Esophagus muscularis mucosa (tissue), 4 donors: ENCODE measurements at regions of chr11 and their contacts with region 1.

Region 1: DNA sequence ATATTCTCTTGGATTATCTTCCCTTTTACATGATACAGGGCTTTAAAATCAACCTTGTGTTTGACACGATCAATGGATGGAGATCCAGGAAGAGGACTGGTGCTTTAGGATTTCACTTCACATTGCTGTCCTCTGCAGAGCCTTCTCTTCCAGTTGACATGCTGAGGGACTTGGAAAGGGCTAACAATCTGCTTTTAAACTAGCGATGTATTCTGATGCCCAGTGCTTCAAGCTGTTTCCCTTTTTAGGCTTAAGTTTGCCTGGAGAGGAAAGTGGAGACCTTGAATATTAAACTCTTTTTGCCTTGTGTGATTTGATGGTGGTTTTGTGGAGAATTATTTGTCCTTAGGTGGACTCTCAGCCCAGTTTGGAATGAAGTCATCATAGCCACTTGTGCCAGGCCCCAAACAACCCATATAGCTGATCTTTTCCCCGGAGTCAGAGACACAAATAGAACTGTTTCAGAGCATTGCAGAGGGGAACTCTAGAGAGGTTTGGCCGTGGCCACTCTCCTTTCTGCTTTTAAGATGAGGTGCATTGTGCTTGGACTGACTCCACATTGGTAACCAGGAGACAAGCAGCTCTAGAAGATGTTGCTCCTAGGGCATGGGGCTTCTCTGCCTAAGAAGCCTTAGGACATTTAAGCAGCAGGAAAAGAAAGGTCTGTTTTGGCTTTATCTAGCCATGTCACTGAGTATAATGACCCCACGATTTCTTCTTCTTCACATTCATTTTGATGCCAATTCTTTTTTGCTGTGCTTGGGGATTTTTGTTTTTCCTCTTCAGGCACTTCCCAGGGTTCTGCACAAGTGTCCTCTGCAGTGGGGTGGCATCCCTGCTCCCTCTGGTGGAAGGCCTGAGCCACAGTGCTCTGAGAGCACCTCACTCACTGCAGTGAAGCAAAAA is 152.8 kb downstream of the NCAM1 start:
- DNase-seq: no peak
- H3K4me3 ChIP-seq: no peak overlapping the region
- H3K27ac ChIP-seq: peak overlapping the region; percentile 47 to 73 (median 50)
- H3K4me1 ChIP-seq: peaks cover 31 to 49% (median 42%) of the 10 kb centered on the region in 4 donors
- H3K27me3 ChIP-seq: no peaks in the 10 kb centered on the region
- CTCF ChIP-seq: peak; percentile 71 to 79 (median 77)
- EP300 ChIP-seq: no peak
- POLR2A ChIP-seq: no peak

Region 2: GRCh38 chr11:112942966-112943643 is 170.9 kb before region 1 on chr11:
- intact Hi-C with region 1: no loop called
- DNase-seq: no peak
- H3K4me3 ChIP-seq: no peak overlapping the region
- H3K27ac ChIP-seq: peak overlapping the region in 3 of 4 donors; percentile 65 to 74 (median 67)
- H3K4me1 ChIP-seq: peaks cover 0 to 34% (median 16%) of the 10 kb centered on the region in 4 donors
- H3K27me3 ChIP-seq: no peaks in the 10 kb centered on the region
- CTCF ChIP-seq: no peak
- EP300 ChIP-seq: no peak
- POLR2A ChIP-seq: no peak

Region 3: GRCh38 chr11:112968941-112969713 is 144.9 kb before region 1 on chr11:
- intact Hi-C with region 1: loop called (anchors 5 kb)
- DNase-seq: no peak
- H3K4me3 ChIP-seq: no peak overlapping the region
- H3K27ac ChIP-seq: no peak overlapping the region
- H3K4me1 ChIP-seq: peaks cover 6 to 19% (median 15%) of the 10 kb centered on the region in 4 donors
- H3K27me3 ChIP-seq: no peaks in the 10 kb centered on the region
- CTCF ChIP-seq: no peak
- EP300 ChIP-seq: no peak
- POLR2A ChIP-seq: no peak